ENCODE measurements at regions of chr14 and their contacts with region 1.

Region 1: GRCh38 chr14:70816525-70816924 is 7.2 kb upstream of the MAP3K9 start:
- DNase-seq: no peak
- ATAC-seq: no peak
- H3K4me3 ChIP-seq: no peak overlapping the region
- H3K27ac ChIP-seq: no peak overlapping the region
- H3K4me1 ChIP-seq: no peaks in the 10 kb centered on the region
- H3K27me3 ChIP-seq: no peaks in the 10 kb centered on the region

Region 2: DNA sequence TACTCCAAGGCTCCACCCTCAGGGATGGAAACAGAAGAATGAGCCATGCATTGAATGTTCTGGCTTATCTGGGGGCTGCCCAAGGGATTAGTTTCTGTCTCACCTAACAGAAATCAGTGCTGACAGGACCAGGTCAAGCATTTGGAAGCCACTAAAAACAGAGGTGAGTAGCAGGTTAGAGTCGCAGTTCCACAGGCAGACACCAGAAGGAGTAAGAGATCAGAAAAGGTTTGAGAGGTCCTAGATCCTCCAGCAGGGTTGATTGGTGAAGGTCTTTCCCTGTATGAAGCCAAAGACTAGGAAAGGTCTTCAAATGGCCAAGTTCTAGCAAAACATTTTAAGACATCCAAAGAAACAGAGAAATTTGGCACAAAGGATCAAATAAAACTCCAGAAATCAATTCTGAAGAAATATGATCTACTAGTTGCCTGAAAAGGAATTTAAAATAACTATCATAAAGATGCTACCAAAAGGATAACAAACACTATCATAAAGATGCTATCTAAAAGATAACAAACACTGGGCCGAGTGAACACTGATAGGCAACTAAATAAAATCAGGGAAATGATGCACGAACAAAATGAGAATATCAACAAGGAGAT is 194.3 kb before region 1 on chr14:
- intact Hi-C with region 1: loop called (anchors 2 to 10 kb)
- DNase-seq: no peak
- ATAC-seq: no peak
- H3K4me3 ChIP-seq: no peak overlapping the region
- H3K27ac ChIP-seq: no peak overlapping the region
- H3K4me1 ChIP-seq: no peaks in the 10 kb centered on the region
- H3K27me3 ChIP-seq: no peaks in the 10 kb centered on the region

Region 3: DNA sequence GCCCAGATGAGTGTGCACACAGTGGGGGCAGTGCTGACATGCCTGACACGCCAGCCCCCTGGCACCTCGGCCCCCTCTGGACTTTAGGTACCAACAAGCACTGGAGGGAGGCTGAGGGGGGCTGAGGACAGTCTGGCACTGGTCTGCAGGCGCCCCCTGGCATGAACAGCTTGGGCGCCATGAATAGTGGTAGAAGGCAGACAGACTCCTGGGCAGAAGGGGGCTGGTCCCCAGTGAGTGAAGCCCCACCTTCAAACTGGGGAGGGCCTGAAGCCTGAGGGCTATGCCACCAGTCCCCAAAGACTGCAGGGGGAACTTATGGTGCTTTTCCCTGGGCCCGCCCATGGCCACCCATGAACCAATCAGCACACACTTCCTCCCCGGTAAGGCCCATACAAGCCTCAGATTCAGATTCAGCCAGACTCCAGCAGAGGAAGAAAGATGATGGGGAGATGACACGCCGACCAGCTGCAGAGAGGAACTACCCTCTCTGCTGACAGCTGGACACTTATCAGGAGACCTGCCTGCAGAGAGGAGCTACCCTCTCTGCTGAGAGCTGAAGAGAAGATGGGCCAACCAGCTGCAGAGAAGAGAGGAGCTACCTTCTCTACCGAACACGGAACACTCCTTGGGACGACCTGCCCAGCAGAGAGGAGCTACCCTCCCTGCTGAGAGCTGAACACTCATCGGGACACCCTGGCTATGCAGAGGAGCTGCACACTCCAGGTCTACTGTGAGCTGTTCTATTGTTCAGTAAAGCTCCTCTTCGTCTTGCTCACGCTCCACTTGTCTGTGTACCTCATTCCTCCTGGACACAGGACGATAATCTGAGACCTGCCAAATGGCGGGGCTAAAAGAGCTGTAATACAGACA is 415.2 kb after region 1 on chr14:
- intact Hi-C with region 1: no loop called
- DNase-seq: no peak
- ATAC-seq: no peak
- H3K4me3 ChIP-seq: no peak overlapping the region
- H3K27ac ChIP-seq: no peak overlapping the region
- H3K4me1 ChIP-seq: no peaks in the 10 kb centered on the region
- H3K27me3 ChIP-seq: no peaks in the 10 kb centered on the region

Measured in aorta (tissue), 5 donors.